Sigmoid colon (tissue), 7 donors: ENCODE measurements at regions of chr2 and their contacts with region 1.

Region 1: DNA sequence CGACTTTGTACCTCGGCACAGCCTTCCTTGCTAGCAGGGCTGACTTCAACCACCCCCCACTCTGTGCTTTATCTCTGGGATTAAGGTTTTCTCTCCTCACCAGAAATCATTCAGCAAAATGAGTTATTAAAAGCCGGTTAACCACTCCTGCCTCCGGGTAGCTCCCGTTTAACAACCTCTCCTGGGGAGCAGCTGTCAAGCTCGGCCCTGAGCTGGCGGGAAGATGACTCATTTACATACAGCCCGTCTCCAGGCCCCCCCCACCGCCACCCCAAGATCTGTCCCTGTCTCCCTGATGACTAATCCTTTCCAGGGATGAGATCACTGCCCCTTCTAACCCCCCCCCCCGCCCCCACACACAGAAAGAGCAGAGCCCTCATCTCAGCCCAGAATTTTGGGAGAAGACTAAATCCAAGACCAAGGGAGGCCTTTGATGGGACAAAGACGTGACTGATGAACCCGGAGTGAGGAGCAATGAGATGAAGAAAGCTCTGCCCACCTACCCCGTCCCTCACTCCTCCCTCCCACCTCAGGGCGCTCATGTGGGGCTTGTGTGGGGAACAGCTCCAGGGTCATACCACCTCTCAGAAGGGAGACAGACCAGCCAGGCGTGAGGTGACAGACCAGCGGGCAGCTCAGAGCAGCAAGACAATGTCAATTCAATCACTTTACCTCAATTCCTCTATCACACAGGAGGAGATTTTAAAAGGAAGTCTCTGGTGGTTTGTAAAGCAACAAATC is 131.4 kb downstream of the MSH2 start:
- DNase-seq: peak; percentile 73
- H3K4me3 ChIP-seq: no peak overlapping the region
- H3K27ac ChIP-seq: no peak overlapping the region
- H3K4me1 ChIP-seq: peaks cover 0 to 11% (median 7%) of the 10 kb centered on the region in 4 donors
- H3K27me3 ChIP-seq: no peaks in the 10 kb centered on the region
- CTCF ChIP-seq: no peak
- EP300 ChIP-seq: no peak
- POLR2A ChIP-seq: no peak

Region 2: GRCh38 chr2:46720592-46721185 is 813.7 kb before region 1 on chr2:
- intact Hi-C with region 1: loop called (anchors 5 kb)
- DNase-seq: no peak
- H3K4me3 ChIP-seq: no peak overlapping the region
- H3K27ac ChIP-seq: peak overlapping the region; percentile 20 to 62 (median 43)
- H3K4me1 ChIP-seq: peaks cover 0 to 92% (median 60%) of the 10 kb centered on the region in 4 donors
- H3K27me3 ChIP-seq: no peaks in the 10 kb centered on the region
- CTCF ChIP-seq: no peak
- EP300 ChIP-seq: no peak
- POLR2A ChIP-seq: no peak

Region 3: DNA sequence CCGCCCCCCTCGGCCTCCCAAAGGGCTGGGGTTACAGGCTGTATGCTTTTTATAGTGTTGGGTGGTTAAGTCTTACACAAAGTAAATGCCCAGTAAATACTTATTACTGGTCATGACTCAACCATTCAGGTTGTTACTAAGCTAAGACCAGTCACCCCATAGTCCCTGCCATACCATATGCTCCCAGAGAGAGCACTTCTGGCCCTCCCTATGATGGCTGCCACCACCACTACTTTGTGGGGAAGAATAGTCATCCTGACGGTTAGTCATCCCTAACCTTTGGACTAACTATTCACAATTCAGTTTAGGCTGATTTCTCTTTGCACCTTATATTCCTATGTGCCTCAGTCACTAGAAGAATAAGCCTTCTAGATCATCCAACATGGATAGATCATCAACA is 173.4 kb before region 1 on chr2:
- intact Hi-C with region 1: no loop called
- DNase-seq: no peak
- H3K4me3 ChIP-seq: no peak overlapping the region
- H3K27ac ChIP-seq: no peak overlapping the region
- H3K4me1 ChIP-seq: peaks cover 0 to 12% (median 7%) of the 10 kb centered on the region in 4 donors
- H3K27me3 ChIP-seq: no peaks in the 10 kb centered on the region
- CTCF ChIP-seq: no peak
- EP300 ChIP-seq: no peak
- POLR2A ChIP-seq: no peak